Panc1 (cell line): ENCODE measurements at regions of chr4 and their contacts with region 1.

Region 1: GRCh38 chr4:57163530-57164459 is 53.6 kb upstream of the IGFBP7 start:
- DNase-seq: peak; percentile 39
- ATAC-seq: peak; percentile 100
- H3K4me3 ChIP-seq: peak overlapping the region; percentile 49 to 72
- H3K27ac ChIP-seq: no peak overlapping the region
- H3K4me1 ChIP-seq: no peaks in the 10 kb centered on the region
- H3K27me3 ChIP-seq: no peaks in the 10 kb centered on the region
- CTCF ChIP-seq: peak; percentile 93

Region 2: DNA sequence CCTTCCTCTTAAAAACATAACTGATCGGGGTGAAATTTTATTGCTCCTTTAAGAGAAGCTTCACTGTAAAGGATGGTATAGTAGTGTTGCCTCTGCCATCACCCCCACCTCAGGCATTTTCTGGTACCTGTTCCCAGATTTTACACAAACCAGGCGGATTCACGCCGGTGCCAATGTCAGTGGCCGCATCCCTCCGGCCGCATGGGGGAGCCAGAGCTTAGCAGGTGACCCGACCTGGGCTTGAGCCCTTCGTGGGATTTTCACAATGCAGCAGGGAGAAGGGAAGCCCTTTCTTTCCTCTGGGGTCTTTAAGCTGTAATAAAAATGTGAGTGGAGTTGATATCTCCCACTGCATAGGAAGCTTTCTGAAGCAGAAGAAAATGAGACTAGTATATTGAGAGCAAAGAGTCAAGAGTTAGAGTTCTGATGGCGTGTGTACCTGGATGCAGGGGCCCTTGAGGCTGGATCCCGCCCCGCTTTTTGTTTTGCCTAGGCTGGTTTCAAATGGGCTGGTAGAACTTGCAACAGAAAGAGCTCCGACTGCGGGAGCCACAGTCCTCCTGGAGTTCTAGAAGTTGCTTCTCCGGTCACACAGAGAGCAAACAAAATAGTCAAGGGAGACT is 125.7 kb before region 1 on chr4:
- CTCF ChIA-PET with region 1: interaction called, 4 read pairs
- POLR2A ChIA-PET with region 1: no interaction called
- in situ Hi-C with region 1: no loop called
- intact Hi-C with region 1: loop called (anchors 5 kb)
- DNase-seq: no peak
- ATAC-seq: peak; percentile 91
- H3K4me3 ChIP-seq: no peak overlapping the region
- H3K27ac ChIP-seq: no peak overlapping the region
- H3K4me1 ChIP-seq: no peaks in the 10 kb centered on the region
- H3K27me3 ChIP-seq: no peaks in the 10 kb centered on the region
- CTCF ChIP-seq: peak; percentile 91

Region 3: DNA sequence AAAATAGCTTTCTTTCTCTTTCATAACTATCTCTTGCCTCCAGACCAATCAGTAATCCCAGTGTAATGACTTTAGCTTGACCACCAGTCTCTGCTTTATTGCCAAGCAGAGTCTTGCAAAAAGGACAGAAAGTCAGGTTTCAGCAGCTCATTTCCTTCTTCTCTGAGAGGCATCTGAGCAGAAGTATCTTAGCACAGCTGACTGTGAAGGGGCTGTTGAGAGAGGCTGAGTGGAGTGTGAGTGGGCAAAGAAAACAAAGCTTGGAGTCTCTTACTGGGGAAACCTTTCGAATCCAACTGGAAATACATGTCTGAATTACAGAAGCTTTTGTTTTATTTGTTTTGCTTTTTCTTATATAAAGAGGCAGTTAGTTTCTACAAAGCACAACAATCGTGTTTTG is 116.7 kb after region 1 on chr4:
- CTCF ChIA-PET with region 1: no interaction called
- POLR2A ChIA-PET with region 1: no interaction called
- in situ Hi-C with region 1: no loop called
- intact Hi-C with region 1: no loop called
- DNase-seq: no peak
- ATAC-seq: no peak
- H3K4me3 ChIP-seq: no peak overlapping the region
- H3K27ac ChIP-seq: no peak overlapping the region
- H3K4me1 ChIP-seq: no peaks in the 10 kb centered on the region
- H3K27me3 ChIP-seq: no peaks in the 10 kb centered on the region
- CTCF ChIP-seq: no peak

Region 4: DNA sequence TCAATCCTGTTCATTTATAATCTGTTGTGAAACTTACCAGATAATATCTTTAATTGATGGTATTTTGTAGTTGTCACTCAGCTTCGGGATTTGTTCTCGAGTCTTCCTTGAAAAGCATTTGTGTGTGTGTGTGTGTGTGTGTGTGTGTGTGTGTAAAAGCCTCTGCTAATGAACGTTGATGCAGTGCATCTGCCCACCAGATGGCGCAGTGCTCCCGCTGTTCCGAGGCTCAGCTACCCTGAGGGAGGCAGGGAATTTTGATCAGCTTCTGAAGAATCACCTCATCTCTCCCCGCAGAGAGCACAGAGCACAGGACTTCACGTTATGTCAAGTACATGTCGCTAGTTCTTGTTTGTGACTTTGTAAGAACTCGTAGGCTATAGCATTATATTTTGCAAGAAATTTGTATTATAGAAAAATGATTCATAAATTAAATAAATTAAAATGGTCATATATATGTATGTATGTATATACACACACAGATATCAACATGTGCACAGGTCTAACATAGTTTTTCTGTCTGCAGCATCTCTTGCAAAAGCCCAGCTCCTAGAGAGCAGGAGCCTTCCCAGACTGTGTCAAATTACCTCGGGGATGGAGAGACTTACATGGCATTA is 263.1 kb after region 1 on chr4:
- CTCF ChIA-PET with region 1: interaction called, 4 read pairs
- POLR2A ChIA-PET with region 1: no interaction called
- in situ Hi-C with region 1: no loop called
- intact Hi-C with region 1: loop called (anchors 5 kb)
- DNase-seq: peak; percentile 38
- ATAC-seq: no peak
- H3K4me3 ChIP-seq: no peak overlapping the region
- H3K27ac ChIP-seq: no peak overlapping the region
- H3K4me1 ChIP-seq: no peaks in the 10 kb centered on the region
- H3K27me3 ChIP-seq: no peaks in the 10 kb centered on the region; the same call in 1 of the 2 replicates
- CTCF ChIP-seq: peak; percentile 82

Region 5: DNA sequence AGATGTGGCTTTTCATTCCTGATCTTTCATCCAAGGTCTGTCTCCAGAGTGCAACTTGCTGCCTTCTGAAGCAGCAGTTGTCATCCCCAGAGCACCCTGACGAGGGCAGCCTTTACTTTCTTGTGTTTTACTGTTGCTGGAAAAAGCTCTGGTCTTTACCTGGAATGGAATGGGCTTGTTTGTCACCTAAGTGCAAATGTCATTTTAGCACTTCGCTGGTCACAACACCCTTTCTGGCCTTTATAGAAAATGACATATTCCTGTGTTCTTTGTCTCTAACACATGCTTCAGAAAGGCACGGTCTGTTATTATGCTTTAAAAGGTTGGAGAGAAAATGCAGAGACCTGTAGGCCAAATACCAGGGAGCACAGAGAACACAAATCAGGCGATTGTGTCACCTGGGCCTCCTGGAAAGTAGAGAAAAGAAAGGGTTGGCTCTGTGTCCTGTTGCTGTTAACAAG is 279.1 kb after region 1 on chr4:
- CTCF ChIA-PET with region 1: no interaction called
- POLR2A ChIA-PET with region 1: no interaction called
- in situ Hi-C with region 1: no loop called
- intact Hi-C with region 1: no loop called
- DNase-seq: peak; percentile 39
- ATAC-seq: no peak
- H3K4me3 ChIP-seq: no peak overlapping the region
- H3K27ac ChIP-seq: no peak overlapping the region
- H3K4me1 ChIP-seq: no peaks in the 10 kb centered on the region
- H3K27me3 ChIP-seq: no peaks in the 10 kb centered on the region; the same call in 1 of the 2 replicates
- CTCF ChIP-seq: peak; percentile 79

Region 6: DNA sequence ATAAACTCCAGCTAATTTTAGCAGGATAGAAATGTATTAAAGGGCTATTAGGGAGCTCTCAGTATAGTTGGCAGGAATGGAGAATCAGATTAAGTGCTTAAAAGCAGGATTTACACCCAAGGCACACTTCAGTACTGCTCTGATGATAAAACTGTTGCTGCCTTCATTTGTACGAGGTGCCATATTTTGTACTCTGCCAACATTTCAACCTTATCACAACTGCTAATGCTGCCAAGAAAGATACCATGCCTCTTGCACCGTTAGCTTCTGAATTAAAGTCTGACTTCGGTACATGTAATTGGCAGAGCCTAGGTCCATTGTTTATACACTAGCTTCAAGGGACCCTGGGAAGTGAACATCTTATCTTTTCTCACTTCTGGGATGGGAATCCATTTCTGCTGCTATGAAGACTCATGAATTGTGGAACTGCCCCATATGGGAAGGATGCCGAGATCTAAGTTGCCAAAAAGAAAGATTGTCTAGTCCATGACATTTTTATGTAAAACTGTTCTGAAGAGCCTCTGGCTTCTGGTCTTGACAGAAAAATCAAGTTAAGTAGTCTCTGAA is 570.4 kb after region 1 on chr4:
- CTCF ChIA-PET with region 1: no interaction called
- POLR2A ChIA-PET with region 1: no interaction called
- in situ Hi-C with region 1: no loop called
- intact Hi-C with region 1: no loop called
- DNase-seq: no peak
- ATAC-seq: no peak
- H3K4me3 ChIP-seq: no peak overlapping the region
- H3K27ac ChIP-seq: no peak overlapping the region
- H3K4me1 ChIP-seq: no peaks in the 10 kb centered on the region
- H3K27me3 ChIP-seq: no peaks in the 10 kb centered on the region
- CTCF ChIP-seq: no peak